ENCODE measurements at regions of chr14 and their contacts with region 1.

Region 1: DNA sequence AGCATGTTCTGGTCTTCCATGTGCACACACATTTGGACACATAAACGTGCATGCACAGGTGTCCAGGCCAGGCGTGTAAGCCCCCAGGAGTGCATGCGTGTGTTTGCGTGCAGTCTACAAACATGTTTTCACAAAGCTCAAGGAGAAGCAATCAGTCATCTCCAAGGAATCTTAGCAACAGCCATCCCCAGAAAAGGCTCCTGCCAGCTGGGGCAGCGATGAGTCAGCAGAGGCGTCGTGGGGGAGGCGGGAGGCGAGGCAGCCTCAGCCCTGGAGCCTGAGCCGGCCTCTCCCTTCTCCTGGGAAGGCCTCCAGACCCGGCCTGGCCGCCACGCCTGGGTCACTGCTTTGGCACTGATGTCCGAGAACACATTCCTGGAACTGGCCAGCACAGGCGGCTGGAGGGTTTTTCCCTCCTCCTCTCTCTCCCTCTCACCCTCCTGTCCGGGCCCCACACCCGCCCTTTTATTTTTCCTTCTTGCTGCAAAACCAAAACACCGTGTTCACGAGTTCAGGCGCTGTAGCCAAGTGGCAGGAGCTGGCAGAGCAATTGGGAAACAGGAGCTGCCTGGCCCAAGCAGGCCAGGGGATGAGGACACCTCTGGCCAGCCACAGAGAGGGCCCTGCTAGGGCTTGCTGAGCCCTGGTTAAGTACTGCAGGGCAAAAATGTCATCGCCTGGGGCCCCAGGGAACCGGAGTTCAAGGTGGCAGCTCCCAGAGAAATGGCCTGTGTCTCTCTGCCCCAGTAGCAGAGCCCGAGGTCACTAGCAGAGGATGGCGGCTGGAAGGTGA is 92.7 kb downstream of the LRRC74A start:
- DNase-seq: peak in 2 of 14 experiments; percentile 46 to 49
- ATAC-seq: no peak
- H3K4me3 ChIP-seq: no peak overlapping the region
- H3K4me3 Mint-ChIP-seq: no peak overlapping the region
- H3K27ac ChIP-seq: no peak overlapping the region
- H3K27ac Mint-ChIP-seq: no peak overlapping the region
- H3K4me1 ChIP-seq: peaks cover 51% of the 10 kb centered on the region
- H3K4me1 Mint-ChIP-seq: peaks cover 60% of the 10 kb centered on the region
- H3K27me3 ChIP-seq: no peaks in the 10 kb centered on the region
- H3K27me3 Mint-ChIP-seq: no peaks in the 10 kb centered on the region
- CTCF ChIP-seq: no peak

Region 2: GRCh38 chr14:76904740-76905438 is 14.1 kb before region 1 on chr14:
- CTCF ChIA-PET with region 1: interaction called, 11 read pairs
- POLR2A ChIA-PET with region 1: no interaction called
- intact Hi-C with region 1: no loop called
- DNase-seq: peak; percentile 51 to 91 (median 76)
- ATAC-seq: peak; percentile 84
- H3K4me3 ChIP-seq: no peak overlapping the region
- H3K4me3 Mint-ChIP-seq: peak overlapping the region; percentile 45
- H3K27ac ChIP-seq: no peak overlapping the region
- H3K27ac Mint-ChIP-seq: peak overlapping the region; percentile 83
- H3K4me1 ChIP-seq: peaks cover 33% of the 10 kb centered on the region
- H3K4me1 Mint-ChIP-seq: peaks cover 30% of the 10 kb centered on the region
- H3K27me3 ChIP-seq: no peaks in the 10 kb centered on the region
- H3K27me3 Mint-ChIP-seq: no peaks in the 10 kb centered on the region
- CTCF ChIP-seq: no peak

Region 3: DNA sequence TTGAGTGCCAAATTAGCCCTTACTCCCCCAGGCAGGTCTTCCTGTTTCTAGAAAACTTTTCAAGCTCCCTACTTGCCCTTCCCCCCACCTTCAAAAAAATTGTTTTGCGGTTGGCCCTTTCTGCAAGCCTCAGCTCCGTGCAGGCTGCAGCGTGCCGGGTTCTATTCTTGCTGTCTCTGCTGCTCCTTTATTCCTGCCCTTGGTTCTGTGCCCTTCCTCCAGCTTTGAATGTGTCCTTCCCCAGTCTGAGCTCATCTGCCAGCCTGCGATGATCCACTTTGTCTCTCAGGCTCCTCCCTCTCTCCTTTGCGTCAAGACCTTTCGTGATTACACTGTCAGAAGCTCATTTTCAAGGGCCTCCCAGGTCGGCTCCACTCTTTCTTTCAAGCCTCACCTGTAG is 11.0 kb after region 1 on chr14:
- CTCF ChIA-PET with region 1: interaction called, 24 read pairs
- POLR2A ChIA-PET with region 1: interaction called, 21 read pairs
- intact Hi-C with region 1: no loop called
- DNase-seq: peak; percentile 40 to 92 (median 60)
- ATAC-seq: peak; percentile 84
- H3K4me3 ChIP-seq: peak overlapping the region; percentile 20
- H3K4me3 Mint-ChIP-seq: peak overlapping the region; percentile 68
- H3K27ac ChIP-seq: peak overlapping the region; percentile 43 to 52
- H3K27ac Mint-ChIP-seq: peak overlapping the region; percentile 86
- H3K4me1 ChIP-seq: peaks cover 78% of the 10 kb centered on the region
- H3K4me1 Mint-ChIP-seq: peaks cover 75% of the 10 kb centered on the region
- H3K27me3 ChIP-seq: no peaks in the 10 kb centered on the region
- H3K27me3 Mint-ChIP-seq: no peaks in the 10 kb centered on the region
- CTCF ChIP-seq: no peak

Region 4: DNA sequence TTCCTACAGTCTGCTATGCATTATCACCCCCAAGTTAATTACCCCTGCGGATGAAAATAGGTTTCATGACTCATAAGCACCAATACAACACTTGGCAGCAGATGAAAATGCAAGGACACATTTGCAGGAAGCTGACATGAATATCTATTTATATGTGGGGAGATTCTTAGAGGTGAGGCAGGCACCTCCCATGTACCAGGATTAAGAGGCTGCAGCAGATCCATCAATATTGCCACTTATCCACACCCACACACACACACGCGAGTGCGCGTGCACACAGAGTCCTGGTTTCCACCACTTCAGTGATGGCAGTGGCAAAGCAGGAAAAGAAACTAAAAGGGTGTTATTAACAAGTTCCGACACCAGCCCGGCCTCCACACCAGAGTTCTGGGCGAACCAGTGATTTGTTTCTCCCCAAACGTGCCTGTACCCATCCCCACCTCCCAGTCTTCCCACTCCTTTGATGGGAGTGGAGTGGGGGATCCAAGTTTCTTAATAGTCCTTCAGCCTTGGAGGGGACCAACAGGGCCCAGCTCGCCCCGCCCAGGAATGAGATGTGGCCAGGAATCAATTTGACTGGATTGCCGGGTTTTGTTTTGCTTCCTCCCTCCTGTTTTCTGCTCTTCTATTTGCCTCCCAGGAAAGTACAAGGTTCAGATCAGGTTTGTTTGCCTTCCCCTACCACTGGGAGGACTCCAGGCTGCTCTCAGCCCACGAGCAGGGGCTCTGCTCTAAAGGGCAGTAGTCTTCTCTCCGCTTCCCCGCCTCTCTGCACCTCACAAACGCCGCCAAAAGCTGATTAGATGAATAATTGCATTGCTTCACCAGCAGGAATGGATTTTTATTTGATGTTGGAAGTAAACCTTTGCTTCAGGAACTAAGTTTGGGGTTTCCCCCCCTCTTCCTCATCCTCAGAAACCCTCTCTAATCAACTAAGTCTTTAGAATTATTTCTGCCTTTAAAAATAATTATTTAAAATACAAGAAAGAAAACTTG is 104.4 kb after region 1 on chr14:
- CTCF ChIA-PET with region 1: interaction called, 11 read pairs
- POLR2A ChIA-PET with region 1: interaction called, 13 read pairs
- intact Hi-C with region 1: loop called in 1 of 2 experiments (anchors 5 kb)
- DNase-seq: peak in 1 of 14 experiments; percentile 33
- ATAC-seq: no peak
- H3K4me3 ChIP-seq: no peak overlapping the region
- H3K4me3 Mint-ChIP-seq: peak overlapping the region; percentile 69
- H3K27ac ChIP-seq: no peak overlapping the region
- H3K27ac Mint-ChIP-seq: peak overlapping the region; percentile 90
- H3K4me1 ChIP-seq: peaks cover 54% of the 10 kb centered on the region
- H3K4me1 Mint-ChIP-seq: peaks cover 36% of the 10 kb centered on the region
- H3K27me3 ChIP-seq: no peaks in the 10 kb centered on the region
- H3K27me3 Mint-ChIP-seq: no peaks in the 10 kb centered on the region
- CTCF ChIP-seq: no peak

Region 5: GRCh38 chr14:77053046-77053841 is 134.3 kb after region 1 on chr14:
- CTCF ChIA-PET with region 1: interaction called, 31 read pairs
- POLR2A ChIA-PET with region 1: no interaction called
- intact Hi-C with region 1: no loop called
- DNase-seq: peak; percentile 62 to 90 (median 72)
- ATAC-seq: peak; percentile 87
- H3K4me3 ChIP-seq: no peak overlapping the region
- H3K4me3 Mint-ChIP-seq: no peak overlapping the region
- H3K27ac ChIP-seq: no peak overlapping the region
- H3K27ac Mint-ChIP-seq: no peak overlapping the region
- H3K4me1 ChIP-seq: peaks cover 28% of the 10 kb centered on the region
- H3K4me1 Mint-ChIP-seq: peaks cover 18% of the 10 kb centered on the region
- H3K27me3 ChIP-seq: no peaks in the 10 kb centered on the region
- H3K27me3 Mint-ChIP-seq: no peaks in the 10 kb centered on the region
- CTCF ChIP-seq: peak; percentile 95

Region 6: GRCh38 chr14:77067632-77068514 is 148.9 kb after region 1 on chr14:
- CTCF ChIA-PET with region 1: interaction called, 27 read pairs
- POLR2A ChIA-PET with region 1: interaction called, 6 read pairs
- intact Hi-C with region 1: no loop called
- DNase-seq: peak; percentile 33 to 77 (median 54)
- ATAC-seq: peak; percentile 72
- H3K4me3 ChIP-seq: no peak overlapping the region
- H3K4me3 Mint-ChIP-seq: no peak overlapping the region
- H3K27ac ChIP-seq: no peak overlapping the region
- H3K27ac Mint-ChIP-seq: no peak overlapping the region
- H3K4me1 ChIP-seq: peaks cover 14% of the 10 kb centered on the region
- H3K4me1 Mint-ChIP-seq: no peaks in the 10 kb centered on the region
- H3K27me3 ChIP-seq: no peaks in the 10 kb centered on the region
- H3K27me3 Mint-ChIP-seq: peaks cover 4% of the 10 kb centered on the region
- CTCF ChIP-seq: peak; percentile 76